Prostate gland (tissue), 2 donors: ENCODE measurements at regions of chr6 and their contacts with region 1.

Region 1: DNA sequence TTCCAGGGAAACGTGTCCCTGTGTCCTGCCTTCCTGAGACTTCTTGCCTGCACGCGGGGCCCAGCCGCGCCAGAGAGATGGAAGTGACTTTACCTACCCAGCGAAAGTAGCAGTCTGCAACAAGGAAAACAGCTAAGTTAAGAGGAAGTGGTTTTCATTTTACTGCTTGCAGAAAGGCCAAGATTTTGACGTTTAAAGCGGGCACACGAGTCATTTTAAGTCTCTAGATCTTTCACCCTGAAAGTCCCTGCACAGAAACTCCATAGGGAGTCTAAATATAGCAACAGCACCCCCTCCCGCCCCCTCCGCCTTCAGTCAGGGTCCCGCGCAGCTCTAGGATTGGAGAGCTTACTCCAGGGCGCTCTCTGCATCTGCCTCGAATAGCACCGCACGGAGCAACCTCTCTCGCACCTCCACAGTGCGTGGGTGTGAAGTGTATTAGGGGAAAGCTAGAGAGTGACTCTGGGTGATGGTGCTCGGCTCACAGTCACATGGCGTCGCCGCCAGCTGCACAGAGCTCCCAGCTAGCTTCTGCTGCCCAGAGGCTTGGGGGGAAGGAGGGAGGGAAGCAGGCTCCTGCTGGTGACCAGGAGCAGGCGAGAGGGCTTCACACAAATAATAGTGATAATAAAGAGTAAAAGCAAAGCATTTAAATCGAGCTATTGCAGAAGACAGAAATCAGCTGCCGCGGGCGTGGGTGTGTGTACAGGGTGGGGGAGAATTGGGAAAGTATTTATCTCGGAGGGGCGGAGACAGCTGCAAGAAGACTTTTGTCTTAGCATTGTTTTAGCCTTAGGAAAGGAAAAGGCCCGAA is 1.8 kb upstream of the KCNQ5 start:
- DNase-seq: no peak
- H3K4me3 ChIP-seq: no peak overlapping the region
- H3K27ac ChIP-seq: no peak overlapping the region
- H3K4me1 ChIP-seq: peaks cover 6% of the 10 kb centered on the region
- H3K27me3 ChIP-seq: no peaks in the 10 kb centered on the region
- CTCF ChIP-seq: no peak
- POLR2A ChIP-seq: no peak

Region 2: DNA sequence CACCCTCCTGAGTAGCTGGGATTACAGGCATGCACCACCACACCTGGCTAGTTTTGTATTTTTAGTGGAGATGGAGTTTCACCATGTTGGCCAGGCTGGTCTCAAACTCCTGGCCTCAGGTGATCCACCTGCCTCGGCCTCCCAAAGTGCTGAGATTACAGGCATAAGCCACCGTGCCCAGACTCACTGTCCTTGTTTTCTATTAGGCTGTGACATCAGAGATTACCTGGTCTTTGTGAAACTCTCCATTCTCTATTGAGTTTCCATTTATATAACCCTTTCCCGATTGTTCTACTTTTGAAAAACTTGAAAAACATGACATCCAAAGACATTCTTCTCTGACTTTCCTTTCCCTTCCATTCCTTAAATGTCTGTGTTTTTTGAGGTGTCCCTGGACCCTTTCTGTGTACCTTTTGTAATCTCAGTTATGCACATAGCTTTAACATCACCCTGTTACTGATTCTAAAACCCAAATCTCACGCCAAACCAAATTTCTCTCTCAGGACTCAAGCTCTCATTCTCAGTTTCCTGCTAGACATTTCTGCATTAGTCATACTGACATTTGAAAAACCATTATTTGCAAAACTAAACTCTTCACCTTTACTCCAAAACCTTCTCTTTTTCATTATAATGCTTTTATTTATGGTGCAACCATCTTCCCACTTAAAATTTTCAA is 468.2 kb after region 1 on chr6:
- intact Hi-C with region 1: no loop called
- DNase-seq: no peak
- H3K4me3 ChIP-seq: no peak overlapping the region
- H3K27ac ChIP-seq: no peak overlapping the region
- H3K4me1 ChIP-seq: no peaks in the 10 kb centered on the region
- H3K27me3 ChIP-seq: no peaks in the 10 kb centered on the region
- CTCF ChIP-seq: no peak
- POLR2A ChIP-seq: no peak

Region 3: DNA sequence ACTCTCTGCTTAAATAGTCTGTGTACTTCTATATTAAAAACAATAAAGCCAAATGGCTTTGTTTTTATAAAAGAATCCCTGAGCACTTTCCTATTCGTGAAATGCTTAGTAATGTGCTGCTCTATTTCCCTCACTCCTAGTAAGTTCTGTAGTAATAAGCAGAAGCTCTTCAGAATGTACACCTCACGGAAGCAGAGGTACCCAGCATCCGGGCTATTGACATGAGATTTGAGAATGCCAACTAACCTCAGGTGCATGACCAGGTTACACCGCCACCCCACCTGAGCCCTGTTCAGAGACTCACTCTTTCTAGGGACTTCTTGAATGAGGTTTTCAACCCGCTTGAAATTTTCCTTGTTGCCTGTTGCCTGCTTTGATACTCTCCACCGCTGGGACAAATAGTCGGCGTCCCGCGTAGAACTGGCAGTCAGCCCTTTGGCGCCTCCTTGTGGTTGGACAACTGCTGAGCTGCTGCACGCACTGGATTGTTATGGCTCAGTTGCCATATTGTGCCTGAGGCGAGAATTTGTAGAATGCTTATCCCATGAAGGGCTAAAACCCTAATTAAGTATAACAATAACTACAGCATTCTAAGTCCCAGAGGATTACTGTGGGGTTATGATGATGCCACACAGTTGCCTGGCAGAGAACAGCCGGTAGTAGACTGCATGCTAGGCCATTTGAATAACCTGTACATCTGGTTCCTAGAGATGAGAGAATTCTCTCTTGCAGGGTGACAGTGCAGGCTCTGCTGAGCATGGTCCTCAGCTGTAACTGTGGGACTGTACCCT is 509.8 kb after region 1 on chr6:
- intact Hi-C with region 1: loop called (anchors 2 kb)
- DNase-seq: peak; percentile 80
- H3K4me3 ChIP-seq: no peak overlapping the region
- H3K27ac ChIP-seq: no peak overlapping the region
- H3K4me1 ChIP-seq: no peaks in the 10 kb centered on the region
- H3K27me3 ChIP-seq: no peaks in the 10 kb centered on the region
- CTCF ChIP-seq: peak; percentile 79 to 91 (median 89)
- POLR2A ChIP-seq: no peak

Region 4: GRCh38 chr6:73180763-73181619 is 560.9 kb after region 1 on chr6:
- intact Hi-C with region 1: loop called (anchors 5 kb)
- DNase-seq: no peak
- H3K4me3 ChIP-seq: no peak overlapping the region
- H3K27ac ChIP-seq: no peak overlapping the region
- H3K4me1 ChIP-seq: no peaks in the 10 kb centered on the region
- H3K27me3 ChIP-seq: no peaks in the 10 kb centered on the region
- CTCF ChIP-seq: peak; percentile 38 to 83 (median 71)
- POLR2A ChIP-seq: no peak